Activated B cell treated with CpG ODN at 0.5 μM for 24 hours (primary cell): ENCODE measurements at regions of chr19 and their contacts with region 1.

Region 1: GRCh38 chr19:18328340-18329034 is 5.6 kb upstream of the LSM4 start:
- DNase-seq: peak; percentile 56
- ATAC-seq: peak; percentile 98
- H3K4me3 Mint-ChIP-seq: peak overlapping the region; percentile 56
- H3K27ac Mint-ChIP-seq: peak overlapping the region; percentile 20
- H3K4me1 Mint-ChIP-seq: peaks cover 14% of the 10 kb centered on the region
- H3K27me3 Mint-ChIP-seq: peaks cover 8% of the 10 kb centered on the region
- CTCF ChIP-seq: peak; percentile 53

Region 2: GRCh38 chr19:17847538-17848366 is 480.7 kb before region 1 on chr19 and contains the start of gene JAK3:
- CTCF ChIA-PET with region 1: no interaction called
- POLR2A ChIA-PET with region 1: no interaction called
- intact Hi-C with region 1: no loop called
- DNase-seq: peak; percentile 79
- ATAC-seq: peak; percentile 86
- H3K4me3 Mint-ChIP-seq: peak within 1 kb of the TSS; percentile 94
- H3K27ac Mint-ChIP-seq: peak within 1 kb of the TSS; percentile 96
- H3K4me1 Mint-ChIP-seq: peaks cover 73% of the 10 kb centered on the region
- H3K27me3 Mint-ChIP-seq: no peaks in the 10 kb centered on the region
- CTCF ChIP-seq: no peak
- total RNA-seq, gene JAK3: 213 and 256 TPM in 2 replicates

Region 3: GRCh38 chr19:18117692-18118378 is 210.7 kb before region 1 on chr19:
- CTCF ChIA-PET with region 1: no interaction called
- POLR2A ChIA-PET with region 1: no interaction called
- intact Hi-C with region 1: loop called (anchors 2 kb)
- DNase-seq: peak; percentile 98
- ATAC-seq: peak; percentile 93
- H3K4me3 Mint-ChIP-seq: peak overlapping the region; percentile 75
- H3K27ac Mint-ChIP-seq: peak overlapping the region; percentile 77
- H3K4me1 Mint-ChIP-seq: peaks cover 40% of the 10 kb centered on the region
- H3K27me3 Mint-ChIP-seq: no peaks in the 10 kb centered on the region
- CTCF ChIP-seq: no peak

Region 4: GRCh38 chr19:18304458-18305310 is 23.8 kb before region 1 on chr19:
- CTCF ChIA-PET with region 1: interaction called, 8 read pairs
- POLR2A ChIA-PET with region 1: interaction called, 11 read pairs
- intact Hi-C with region 1: loop called (anchors 1 kb)
- DNase-seq: peak; percentile 74
- ATAC-seq: peak; percentile 73
- H3K4me3 Mint-ChIP-seq: peak overlapping the region; percentile 85
- H3K27ac Mint-ChIP-seq: peak overlapping the region; percentile 95
- H3K4me1 Mint-ChIP-seq: peaks cover 54% of the 10 kb centered on the region
- H3K27me3 Mint-ChIP-seq: no peaks in the 10 kb centered on the region
- CTCF ChIP-seq: no peak